Dorsolateral prefrontal cortex (tissue), 120 donors: ENCODE measurements at regions of chr5 and their contacts with region 1.

Region 1: GRCh38 chr5:180209137-180209581 is at the start of gene RASGEF1C:
- DNase-seq: peak in 5 of 10 donors; percentile 58 to 80 (median 68)
- H3K4me3 ChIP-seq: peak within 1 kb of the TSS; percentile 38 to 74 (median 63)
- H3K27ac ChIP-seq: peak within 1 kb of the TSS in 26 of 59 donors; percentile 3 to 82 (median 51)
- H3K27me3 ChIP-seq: peaks cover 0 to 2% (median 0%) of the 10 kb centered on the region in 45 donors
- CTCF ChIP-seq: peak in 37 of 56 donors; percentile 9 to 69 (median 47)
- total RNA-seq, gene RASGEF1C: 6.8 to 16.9 (median 11.4) TPM

Region 2: DNA sequence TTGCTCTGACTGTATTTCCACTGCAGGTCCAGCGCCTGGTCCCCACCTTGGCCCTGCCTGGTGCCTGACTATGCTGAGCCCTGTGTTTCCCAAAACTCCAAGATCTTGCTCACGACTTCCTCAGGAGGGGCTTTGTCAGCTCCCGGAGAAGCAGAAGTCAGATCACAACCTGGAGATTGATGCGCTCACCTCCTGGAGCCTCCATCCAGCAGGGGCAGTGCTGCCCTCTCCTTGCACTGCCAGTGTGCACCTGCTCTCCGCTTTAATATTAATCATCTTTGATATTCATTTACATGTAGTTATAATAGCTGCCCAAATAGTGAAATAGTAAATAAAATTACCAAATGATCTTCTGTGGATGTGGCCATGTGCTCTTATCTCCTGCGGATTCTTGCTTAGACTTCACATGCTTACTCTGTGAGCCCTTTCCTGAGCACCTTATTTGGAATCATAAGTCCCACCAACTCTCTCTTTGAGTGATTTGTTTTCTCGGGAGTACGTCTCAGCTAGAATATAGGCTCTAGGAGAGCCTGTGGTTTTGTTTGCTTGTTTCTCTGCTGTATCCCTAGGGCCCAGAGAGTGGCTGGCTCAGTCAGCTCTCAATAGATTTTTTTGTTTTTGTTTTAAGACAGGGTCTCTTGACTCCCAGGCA is 459.2 kb before region 1 on chr5:
- intact Hi-C with region 1: no loop called
- DNase-seq: no peak
- H3K4me3 ChIP-seq: no peak overlapping the region
- H3K27ac ChIP-seq: no peak overlapping the region
- H3K27me3 ChIP-seq: no peaks in the 10 kb centered on the region
- CTCF ChIP-seq: no peak

Region 3: GRCh38 chr5:180126726-180127681 is 82.2 kb before region 1 on chr5:
- intact Hi-C with region 1: loop called (anchors 2 to 5 kb)
- DNase-seq: peak in 6 of 10 donors; percentile 29 to 77 (median 50)
- H3K4me3 ChIP-seq: peak overlapping the region in 5 of 59 donors; percentile 2 to 33 (median 11)
- H3K27ac ChIP-seq: peak overlapping the region in 13 of 59 donors; percentile 1 to 87 (median 77)
- H3K27me3 ChIP-seq: no peaks in the 10 kb centered on the region
- CTCF ChIP-seq: peak; percentile 61 to 94 (median 87)

Region 4: GRCh38 chr5:180161420-180162303 is 47.5 kb before region 1 on chr5:
- intact Hi-C with region 1: loop called (anchors 2 kb)
- DNase-seq: peak in 7 of 10 donors; percentile 47 to 80 (median 74)
- H3K4me3 ChIP-seq: peak overlapping the region in 17 of 59 donors; percentile 4 to 33 (median 13)
- H3K27ac ChIP-seq: peak overlapping the region in 44 of 59 donors; percentile 2 to 93 (median 54)
- H3K27me3 ChIP-seq: no peaks in the 10 kb centered on the region
- CTCF ChIP-seq: peak in 53 of 56 donors; percentile 11 to 84 (median 55)

Region 5: GRCh38 chr5:180241600-180241999 is 32.4 kb after region 1 on chr5:
- intact Hi-C with region 1: loop called in 1 of 2 experiments (anchors 1 kb)
- DNase-seq: peak in 2 of 10 donors; percentile 21 to 55
- H3K4me3 ChIP-seq: no peak overlapping the region
- H3K27ac ChIP-seq: peak overlapping the region in 3 of 59 donors; percentile 7 to 16 (median 7)
- H3K27me3 ChIP-seq: no peaks in the 10 kb centered on the region
- CTCF ChIP-seq: no peak

Region 6: GRCh38 chr5:180284149-180284548 is 75.0 kb after region 1 on chr5:
- intact Hi-C with region 1: loop called (anchors 5 to 10 kb)
- DNase-seq: peak; percentile 46 to 77 (median 71)
- H3K4me3 ChIP-seq: peak overlapping the region in 1 of 59 donors; percentile 15
- H3K27ac ChIP-seq: peak overlapping the region in 12 of 59 donors; percentile 7 to 51 (median 39)
- H3K27me3 ChIP-seq: no peaks in the 10 kb centered on the region
- CTCF ChIP-seq: peak in 52 of 56 donors; percentile 35 to 74 (median 53)

Region 7: DNA sequence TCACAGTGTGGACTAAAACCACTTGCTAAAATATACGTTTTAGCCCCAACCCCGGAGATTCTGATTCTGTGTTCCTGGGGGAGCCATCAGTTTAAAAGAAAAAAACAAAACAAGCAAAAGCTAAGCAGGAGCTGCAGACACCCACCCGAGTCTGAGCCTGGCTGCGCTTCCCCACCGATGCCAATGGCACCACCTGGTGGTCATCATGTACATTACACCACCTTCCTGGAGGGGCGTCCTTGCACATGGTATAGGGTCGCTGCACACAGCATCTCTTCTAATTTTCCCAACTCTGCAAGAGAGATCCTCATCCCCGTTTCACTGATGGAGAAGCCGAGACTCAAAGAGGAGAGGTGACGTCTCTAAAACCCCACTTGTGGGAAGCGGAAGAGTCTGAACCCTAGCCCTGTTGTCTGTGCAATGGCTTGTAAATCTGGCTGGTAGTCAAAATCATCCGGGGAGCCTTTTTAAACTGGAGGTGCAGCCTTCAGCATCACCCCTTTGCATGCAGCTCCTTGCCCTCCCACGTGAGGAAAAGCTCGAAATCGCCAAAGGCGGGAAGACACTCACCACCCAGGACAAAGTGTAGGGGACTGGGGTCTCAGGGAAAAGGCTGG is 261.9 kb after region 1 on chr5:
- intact Hi-C with region 1: loop called in 1 of 2 experiments (anchors 10 kb)
- DNase-seq: peak in 9 of 10 donors; percentile 41 to 82 (median 65)
- H3K4me3 ChIP-seq: no peak overlapping the region
- H3K27ac ChIP-seq: no peak overlapping the region
- H3K27me3 ChIP-seq: peaks cover 0 to 4% (median 0%) of the 10 kb centered on the region in 45 donors
- CTCF ChIP-seq: peak; percentile 84 to 98 (median 95)